ENCODE measurements at regions of chr15 and their contacts with region 1.

Region 1: GRCh38 chr15:75002398-75002797 is 7.0 kb downstream of the SCAMP5 start:
- DNase-seq: no peak
- H3K4me3 ChIP-seq: no peak overlapping the region
- H3K27ac ChIP-seq: no peak overlapping the region
- H3K4me1 ChIP-seq: no peaks in the 10 kb centered on the region
- H3K27me3 ChIP-seq: no peaks in the 10 kb centered on the region
- CTCF ChIP-seq: no peak

Region 2: DNA sequence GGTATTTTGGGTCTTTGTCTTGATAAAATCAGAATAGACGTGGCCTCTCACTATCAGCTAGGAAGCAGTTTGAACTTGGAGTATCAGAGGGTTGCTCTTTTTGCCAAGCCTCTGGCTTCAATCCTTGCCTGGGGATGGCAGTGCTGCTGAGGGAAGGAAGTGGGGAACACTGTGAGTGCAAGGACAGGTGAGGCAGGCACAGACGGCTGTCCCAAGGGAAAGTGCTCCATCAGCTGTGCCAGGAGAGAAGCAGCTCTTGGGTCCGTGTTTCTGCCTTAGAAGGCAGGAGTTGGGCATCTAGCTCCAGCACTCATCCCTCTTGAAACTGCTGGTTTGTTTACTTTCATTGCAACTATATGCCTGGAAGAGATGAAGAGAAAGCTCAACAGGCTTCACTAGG is 974.7 kb before region 1 on chr15:
- CTCF ChIA-PET with region 1: no interaction called
- POLR2A ChIA-PET with region 1: interaction called, 11 read pairs
- intact Hi-C with region 1: no loop called
- DNase-seq: no peak
- H3K4me3 ChIP-seq: no peak overlapping the region
- H3K27ac ChIP-seq: no peak overlapping the region
- H3K4me1 ChIP-seq: no peaks in the 10 kb centered on the region
- H3K27me3 ChIP-seq: no peaks in the 10 kb centered on the region
- CTCF ChIP-seq: no peak

Region 3: DNA sequence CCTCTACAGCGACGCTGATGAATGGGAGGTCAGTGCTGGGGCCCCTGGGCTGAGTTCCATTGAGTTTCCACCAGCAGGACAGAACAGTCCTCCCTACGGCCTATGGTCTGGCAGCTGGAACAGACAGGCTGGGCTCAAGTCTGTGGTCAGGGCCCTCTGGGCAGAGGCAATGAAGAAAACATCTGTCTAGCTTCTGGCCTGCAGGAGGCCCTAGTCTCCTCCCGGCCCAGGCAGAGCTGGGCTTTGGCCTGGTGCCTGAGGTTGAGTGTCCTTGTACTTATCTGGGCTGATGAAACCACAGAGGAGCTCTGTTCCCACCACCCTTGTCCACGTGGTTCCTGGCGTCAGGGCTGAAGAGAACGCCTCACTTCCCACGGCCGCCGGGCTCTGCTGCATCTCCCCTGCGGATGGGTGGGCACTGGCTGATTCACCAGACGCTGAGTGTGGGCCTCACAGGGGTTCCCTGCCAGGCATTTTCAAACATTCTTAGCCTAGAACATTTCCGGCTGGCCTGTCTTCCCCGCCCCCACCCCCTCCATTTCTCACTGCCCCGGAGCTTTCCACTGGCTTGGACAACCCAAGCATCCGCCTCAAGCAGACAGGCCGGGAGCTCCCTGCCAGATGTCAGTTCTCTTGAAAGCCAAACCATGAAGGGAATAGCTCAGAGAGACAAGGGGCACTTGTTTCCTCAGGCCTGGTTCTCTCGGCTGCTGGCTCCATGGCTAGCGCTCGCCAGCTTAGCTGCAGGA is 41.3 kb after region 1 on chr15:
- CTCF ChIA-PET with region 1: no interaction called
- POLR2A ChIA-PET with region 1: no interaction called
- intact Hi-C with region 1: no loop called
- DNase-seq: peak; percentile 84 to 89
- H3K4me3 ChIP-seq: no peak overlapping the region
- H3K27ac ChIP-seq: peak overlapping the region; percentile 99
- H3K4me1 ChIP-seq: peaks cover 80% of the 10 kb centered on the region
- H3K27me3 ChIP-seq: no peaks in the 10 kb centered on the region
- CTCF ChIP-seq: peak; percentile 40; the same call in 1 of the 2 replicates